Activated CD4-positive, alpha-beta T cell treated with anti-CD3 and anti-CD28 coated beads, Interleukin-2, amount 10 ng/mL, durations not matched to agents 7 days and 5 days (primary cell): ENCODE measurements at regions of chr1 and their contacts with region 1.

Region 1: DNA sequence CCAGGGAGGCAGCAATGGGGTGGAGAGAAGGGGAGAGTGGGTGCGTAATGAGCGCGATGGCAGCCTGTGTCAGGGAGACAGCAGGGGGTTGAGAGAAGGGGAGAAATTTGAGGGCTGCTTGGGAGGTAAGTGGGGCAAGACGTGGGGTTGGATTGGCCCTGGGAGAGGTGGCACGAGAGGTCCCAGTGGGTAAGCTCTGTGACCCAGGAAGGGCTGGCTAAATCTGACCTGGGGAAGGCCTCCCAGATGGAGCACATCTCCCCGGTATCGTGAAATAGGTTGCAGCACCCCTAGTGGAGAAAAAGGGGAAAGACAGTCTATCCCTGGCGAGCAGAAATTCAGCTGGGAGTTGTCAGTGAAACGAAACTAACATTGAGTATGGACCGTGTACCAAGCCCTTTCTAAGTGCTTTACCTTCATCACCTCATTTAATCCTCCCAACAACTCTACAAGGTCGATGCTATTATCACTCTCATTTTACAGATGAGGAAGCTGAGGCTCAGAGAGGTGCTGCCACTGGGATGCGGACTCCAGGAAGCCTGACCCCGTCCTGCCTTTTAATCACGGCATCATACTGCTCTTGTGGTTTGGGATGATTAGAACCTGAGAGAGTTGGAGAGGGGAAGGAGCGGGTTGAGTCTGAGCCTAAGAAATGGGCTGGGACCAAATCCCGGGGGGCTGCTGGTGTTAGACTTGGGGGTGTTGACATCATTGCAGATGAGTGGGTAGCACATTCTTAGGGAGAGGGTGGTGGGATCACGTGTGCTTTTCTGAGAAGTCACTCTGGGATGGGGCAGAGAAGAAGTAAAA is 56.6 kb upstream of the RPL11 start:
- DNase-seq: peak; percentile 72
- H3K4me3 Mint-ChIP-seq: peak overlapping the region; percentile 55
- H3K27ac Mint-ChIP-seq: peak overlapping the region; percentile 83
- H3K4me1 Mint-ChIP-seq: peaks cover 28% of the 10 kb centered on the region
- H3K27me3 Mint-ChIP-seq: no peaks in the 10 kb centered on the region

Region 2: DNA sequence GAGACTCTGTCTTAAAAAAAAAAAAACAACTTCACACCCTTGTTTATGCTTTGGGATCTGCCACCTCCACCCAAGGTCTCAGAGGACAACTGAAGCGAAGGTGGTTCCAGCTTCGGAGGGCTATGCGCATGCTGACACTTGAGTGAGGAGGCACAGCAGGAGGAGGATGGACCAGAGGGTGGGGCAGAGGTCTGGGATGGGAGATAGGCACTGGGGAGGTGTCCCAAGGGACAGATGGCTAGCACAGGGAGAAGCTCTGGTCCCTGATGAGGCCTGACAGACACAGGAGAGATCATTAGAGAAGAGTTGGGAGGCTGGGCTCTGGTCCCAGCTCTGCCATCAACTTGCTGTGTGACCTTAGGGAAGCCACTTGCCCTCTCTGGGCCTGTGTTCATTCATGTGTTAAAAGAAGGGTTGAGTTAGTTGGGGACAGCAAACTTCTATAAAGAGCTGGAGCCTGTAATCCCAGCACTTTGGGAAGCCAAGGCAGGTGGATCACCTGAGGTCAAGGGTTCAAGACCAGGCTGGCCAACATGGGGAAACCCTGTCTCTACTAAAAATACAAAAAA is 120.9 kb before region 1 on chr1:
- CTCF ChIA-PET with region 1: interaction called, 10 read pairs
- POLR2A ChIA-PET with region 1: no interaction called
- DNase-seq: no peak
- H3K4me3 Mint-ChIP-seq: no peak overlapping the region
- H3K27ac Mint-ChIP-seq: peak overlapping the region; percentile 58
- H3K4me1 Mint-ChIP-seq: peaks cover 5% of the 10 kb centered on the region
- H3K27me3 Mint-ChIP-seq: no peaks in the 10 kb centered on the region

Region 3: DNA sequence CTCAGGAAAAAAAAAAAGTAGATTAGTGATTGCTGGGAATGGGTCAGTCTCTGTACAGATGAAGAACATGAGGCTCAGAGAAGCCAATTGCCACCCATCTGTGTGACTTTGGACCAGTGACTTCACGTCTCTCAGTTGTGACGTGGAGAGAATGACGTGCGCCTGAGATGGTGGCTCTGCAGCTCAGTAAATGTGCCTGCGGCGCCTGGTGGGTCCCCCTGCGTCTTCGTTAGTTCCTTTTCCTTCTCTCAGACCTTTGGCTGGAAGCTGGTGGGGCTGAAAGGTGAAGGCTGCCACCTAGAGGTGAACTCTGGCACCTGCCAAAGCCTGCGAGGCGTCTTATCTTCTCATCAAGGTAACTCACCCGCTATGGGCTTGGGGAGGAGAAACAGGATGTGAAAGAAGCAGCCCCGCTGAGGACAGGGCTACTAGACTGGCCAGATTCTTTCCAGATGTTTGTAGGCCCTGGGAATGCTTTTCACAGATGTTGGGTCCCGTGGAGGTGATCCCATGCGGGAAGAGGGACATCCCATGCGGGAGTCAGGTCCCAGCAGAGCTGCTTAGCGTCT is 95.3 kb before region 1 on chr1:
- CTCF ChIA-PET with region 1: interaction called, 79 read pairs
- POLR2A ChIA-PET with region 1: interaction called, 5 read pairs
- DNase-seq: peak; percentile 96
- H3K4me3 Mint-ChIP-seq: peak overlapping the region; percentile 37
- H3K27ac Mint-ChIP-seq: peak overlapping the region; percentile 82
- H3K4me1 Mint-ChIP-seq: peaks cover 31% of the 10 kb centered on the region
- H3K27me3 Mint-ChIP-seq: no peaks in the 10 kb centered on the region

Region 4: GRCh38 chr1:23559136-23559984 is 75.7 kb before region 1 on chr1 and contains the start of gene ID3:
- CTCF ChIA-PET with region 1: interaction called, 31 read pairs
- POLR2A ChIA-PET with region 1: interaction called, 6 read pairs
- DNase-seq: peak; percentile 96
- H3K4me3 Mint-ChIP-seq: peak within 1 kb of the TSS; percentile 84
- H3K27ac Mint-ChIP-seq: peak within 1 kb of the TSS; percentile 93
- H3K4me1 Mint-ChIP-seq: peaks cover 76% of the 10 kb centered on the region
- H3K27me3 Mint-ChIP-seq: peaks cover 33% of the 10 kb centered on the region
- total RNA-seq, gene ID3: 62.7 to 65.2 TPM

Region 5: GRCh38 chr1:23613191-23614031 is 21.6 kb before region 1 on chr1:
- CTCF ChIA-PET with region 1: interaction called, 50 read pairs
- POLR2A ChIA-PET with region 1: no interaction called
- DNase-seq: peak; percentile 73
- H3K4me3 Mint-ChIP-seq: peak overlapping the region; percentile 29
- H3K27ac Mint-ChIP-seq: peak overlapping the region; percentile 96
- H3K4me1 Mint-ChIP-seq: peaks cover 76% of the 10 kb centered on the region
- H3K27me3 Mint-ChIP-seq: no peaks in the 10 kb centered on the region